CD4-positive, alpha-beta memory T cell (primary cell): ENCODE measurements at regions of chr11 and their contacts with region 1.

Region 1: GRCh38 chr11:49533204-49533603 is 324.8 kb upstream of the FOLH1 start:
- DNase-seq: no peak
- H3K4me3 ChIP-seq: no peak overlapping the region
- H3K4me3 Mint-ChIP-seq: no peak overlapping the region
- H3K27ac ChIP-seq: no peak overlapping the region
- H3K27ac Mint-ChIP-seq: no peak overlapping the region
- H3K4me1 ChIP-seq: no peaks in the 10 kb centered on the region
- H3K4me1 Mint-ChIP-seq: no peaks in the 10 kb centered on the region
- H3K27me3 ChIP-seq: no peaks in the 10 kb centered on the region
- H3K27me3 Mint-ChIP-seq: no peaks in the 10 kb centered on the region

Region 2: GRCh38 chr11:48116437-48117228 is 1416.6 kb before region 1 on chr11:
- CTCF ChIA-PET with region 1: no interaction called
- POLR2A ChIA-PET with region 1: no interaction called
- intact Hi-C with region 1: loop called (anchors 10 kb)
- DNase-seq: no peak
- H3K4me3 ChIP-seq: no peak overlapping the region
- H3K4me3 Mint-ChIP-seq: no peak overlapping the region
- H3K27ac ChIP-seq: no peak overlapping the region
- H3K27ac Mint-ChIP-seq: peak overlapping the region in 1 of 7 donors; percentile 10
- H3K4me1 ChIP-seq: no peaks in the 10 kb centered on the region
- H3K4me1 Mint-ChIP-seq: peaks cover 0 to 3% (median under 1%) of the 10 kb centered on the region in 4 donors
- H3K27me3 ChIP-seq: no peaks in the 10 kb centered on the region
- H3K27me3 Mint-ChIP-seq: no peaks in the 10 kb centered on the region